ENCODE measurements at regions of chr10 and their contacts with region 1.

Region 1: DNA sequence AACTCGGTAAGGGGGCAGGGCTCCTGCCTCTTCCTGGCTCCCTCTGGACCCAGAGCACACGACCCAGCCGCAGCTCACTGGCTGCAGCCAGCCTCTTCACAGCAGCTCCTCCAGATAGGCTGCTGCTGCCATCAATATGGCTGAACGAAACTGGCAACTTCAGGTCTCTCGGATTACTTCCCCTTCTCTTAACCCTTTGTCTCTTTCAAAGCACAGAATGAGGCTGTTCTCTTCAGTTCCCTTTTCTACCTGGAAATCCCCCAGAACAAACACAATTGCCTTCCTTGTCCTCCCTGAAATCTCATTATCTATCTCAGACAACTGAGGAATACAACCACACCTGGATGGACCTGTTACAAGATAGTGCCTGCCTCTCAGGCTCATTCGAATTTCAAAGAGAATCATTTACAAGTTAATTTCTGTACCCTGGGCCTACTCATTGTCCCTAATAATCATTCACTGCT is 193.4 kb upstream of the MBL2 start:
- DNase-seq: peak; percentile 60 to 69
- H3K4me3 ChIP-seq: no peak overlapping the region
- H3K4me3 Mint-ChIP-seq: peak overlapping the region; percentile 44
- H3K27ac Mint-ChIP-seq: peak overlapping the region; percentile 88
- H3K4me1 ChIP-seq: peaks cover 70% of the 10 kb centered on the region
- H3K4me1 Mint-ChIP-seq: peaks cover 57% of the 10 kb centered on the region
- H3K27me3 ChIP-seq: no peaks in the 10 kb centered on the region
- H3K27me3 Mint-ChIP-seq: no peaks in the 10 kb centered on the region
- CTCF ChIP-seq: no peak

Region 2: DNA sequence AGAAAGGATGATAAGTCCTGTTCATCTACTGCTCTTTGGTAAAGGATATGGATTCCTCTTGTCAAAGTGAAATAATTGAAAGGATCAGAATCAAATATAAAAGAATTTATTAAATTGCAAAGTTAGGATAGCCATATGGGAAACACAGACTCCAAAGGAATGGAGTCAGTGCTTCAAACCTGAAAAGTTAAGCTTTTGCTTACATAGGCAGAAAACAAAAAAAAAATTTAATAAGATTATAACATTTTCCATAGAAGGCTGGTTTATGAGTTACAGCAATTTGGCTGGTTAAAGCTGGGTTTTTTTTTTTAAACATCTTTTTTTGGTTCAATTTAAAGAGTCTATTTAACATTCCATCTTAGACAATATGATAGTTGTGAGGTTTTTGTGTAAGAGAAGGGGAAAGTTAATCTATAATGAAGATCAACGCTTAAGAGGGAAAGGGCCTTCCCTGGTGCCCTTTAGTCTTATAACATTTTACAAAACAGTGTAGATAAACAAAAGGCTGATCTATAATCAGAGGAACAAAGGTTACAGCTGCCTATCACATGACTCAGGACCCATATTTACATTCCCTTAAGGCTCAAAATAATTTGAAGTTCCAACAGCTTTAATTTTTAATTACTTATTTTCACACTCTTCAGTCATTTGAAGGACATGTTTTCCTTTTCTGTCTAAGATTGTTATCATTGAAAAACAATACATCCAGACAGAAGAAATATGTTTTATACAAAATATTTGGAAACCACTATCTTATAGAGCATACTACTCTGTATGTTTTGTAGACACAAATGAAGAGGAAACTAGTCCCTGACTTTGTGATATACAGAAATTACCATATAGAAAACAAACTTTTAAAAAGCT is 40.9 kb after region 1 on chr10:
- CTCF ChIA-PET with region 1: no interaction called
- POLR2A ChIA-PET with region 1: interaction called, 13 read pairs
- intact Hi-C with region 1: loop called (anchors 1 kb)
- DNase-seq: peak in 1 of 2 experiments; percentile 48
- H3K4me3 ChIP-seq: no peak overlapping the region
- H3K4me3 Mint-ChIP-seq: peak overlapping the region; percentile 48
- H3K27ac Mint-ChIP-seq: peak overlapping the region; percentile 71
- H3K4me1 ChIP-seq: peaks cover 68% of the 10 kb centered on the region
- H3K4me1 Mint-ChIP-seq: peaks cover 58% of the 10 kb centered on the region
- H3K27me3 ChIP-seq: no peaks in the 10 kb centered on the region
- H3K27me3 Mint-ChIP-seq: no peaks in the 10 kb centered on the region
- CTCF ChIP-seq: no peak

Region 3: DNA sequence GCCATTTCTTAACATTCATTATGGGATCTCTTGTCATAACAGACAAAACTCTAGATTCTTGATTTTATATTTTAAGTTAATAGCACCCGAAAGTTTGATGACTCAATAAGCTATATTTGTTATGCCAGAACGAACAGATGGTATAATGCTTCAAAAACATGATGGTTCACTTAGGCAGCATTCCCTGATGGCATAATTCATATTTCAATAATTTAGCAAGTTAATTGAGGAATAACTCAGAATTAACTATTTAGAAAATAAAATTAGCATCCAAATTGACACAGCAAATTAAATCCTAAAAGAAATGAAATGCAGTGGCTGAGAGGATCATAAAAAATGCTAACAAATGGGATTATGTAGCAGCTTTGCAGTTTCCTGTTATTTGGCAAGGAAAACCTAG is 67.4 kb after region 1 on chr10:
- CTCF ChIA-PET with region 1: no interaction called
- POLR2A ChIA-PET with region 1: no interaction called
- intact Hi-C with region 1: loop called (anchors 5 kb)
- DNase-seq: no peak
- H3K4me3 ChIP-seq: no peak overlapping the region
- H3K4me3 Mint-ChIP-seq: no peak overlapping the region
- H3K27ac Mint-ChIP-seq: no peak overlapping the region
- H3K4me1 ChIP-seq: peaks cover 31% of the 10 kb centered on the region
- H3K4me1 Mint-ChIP-seq: peaks cover 22% of the 10 kb centered on the region
- H3K27me3 ChIP-seq: no peaks in the 10 kb centered on the region
- H3K27me3 Mint-ChIP-seq: no peaks in the 10 kb centered on the region
- CTCF ChIP-seq: no peak

Measured in Caco-2 (cell line).